Transverse colon (tissue), 4 donors: ENCODE measurements at regions of chr17 and their contacts with region 1.

Region 1: DNA sequence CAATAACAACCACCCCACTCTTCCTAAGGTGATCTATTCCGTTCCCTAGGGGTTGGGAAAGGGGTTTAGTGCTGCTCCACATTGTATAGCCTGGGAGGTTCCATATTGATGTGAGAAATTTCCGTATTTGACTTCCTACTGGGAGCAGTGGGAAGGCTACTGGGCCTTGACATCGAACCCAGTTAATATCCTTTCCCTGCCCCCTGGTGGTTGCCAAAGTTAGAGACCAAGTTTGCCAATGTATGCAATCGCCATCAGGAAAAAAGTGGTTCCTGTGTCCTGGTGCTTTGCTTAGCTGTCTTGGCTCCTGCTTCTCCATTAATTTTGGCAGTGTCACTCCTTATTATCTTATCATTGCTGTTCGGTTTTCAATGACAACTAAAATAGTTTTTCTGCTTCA is 914.9 kb downstream of the KCNJ2 start:
- DNase-seq: peak; percentile 46
- H3K4me3 ChIP-seq: no peak overlapping the region
- H3K27ac ChIP-seq: no peak overlapping the region
- H3K4me1 ChIP-seq: no peaks in the 10 kb centered on the region
- H3K27me3 ChIP-seq: no peaks in the 10 kb centered on the region
- CTCF ChIP-seq: peak; percentile 22 to 51 (median 39)
- EP300 ChIP-seq: no peak
- POLR2A ChIP-seq: no peak

Region 2: GRCh38 chr17:70636517-70637133 is 447.6 kb before region 1 on chr17:
- in situ Hi-C with region 1: loop called in 3 of 4 experiments (anchors 25 kb)
- intact Hi-C with region 1: no loop called
- DNase-seq: no peak
- H3K4me3 ChIP-seq: no peak overlapping the region
- H3K27ac ChIP-seq: no peak overlapping the region
- H3K4me1 ChIP-seq: no peaks in the 10 kb centered on the region
- H3K27me3 ChIP-seq: no peaks in the 10 kb centered on the region
- CTCF ChIP-seq: peak; percentile 78 to 91 (median 82)
- EP300 ChIP-seq: no peak
- POLR2A ChIP-seq: no peak

Region 3: GRCh38 chr17:70834039-70834438 is 250.2 kb before region 1 on chr17:
- in situ Hi-C with region 1: no loop called
- intact Hi-C with region 1: no loop called
- DNase-seq: no peak
- H3K4me3 ChIP-seq: no peak overlapping the region
- H3K27ac ChIP-seq: no peak overlapping the region
- H3K4me1 ChIP-seq: no peaks in the 10 kb centered on the region
- H3K27me3 ChIP-seq: no peaks in the 10 kb centered on the region
- CTCF ChIP-seq: no peak
- EP300 ChIP-seq: no peak
- POLR2A ChIP-seq: no peak

Region 4: DNA sequence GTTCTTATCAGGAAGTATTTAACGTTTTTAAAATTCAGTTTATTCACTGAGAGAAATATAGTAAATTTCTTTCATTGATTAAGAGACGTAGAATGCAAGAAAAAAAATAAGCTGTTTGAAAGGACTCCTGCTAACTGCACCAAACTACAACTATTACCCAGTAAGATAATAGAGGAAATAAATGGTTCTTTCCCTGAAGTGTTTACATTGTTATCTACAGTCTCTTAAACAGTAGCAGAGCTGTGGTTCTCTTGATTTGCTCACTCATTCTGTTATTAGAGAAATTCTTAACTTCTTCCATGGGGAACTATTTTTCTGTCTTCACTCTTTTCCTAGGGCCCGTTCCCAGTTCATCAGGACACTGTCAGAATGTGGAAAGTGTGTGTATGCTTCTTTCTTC is 58.1 kb after region 1 on chr17:
- in situ Hi-C with region 1: no loop called
- intact Hi-C with region 1: no loop called
- DNase-seq: no peak
- H3K4me3 ChIP-seq: no peak overlapping the region
- H3K27ac ChIP-seq: no peak overlapping the region
- H3K4me1 ChIP-seq: no peaks in the 10 kb centered on the region
- H3K27me3 ChIP-seq: no peaks in the 10 kb centered on the region
- CTCF ChIP-seq: no peak
- EP300 ChIP-seq: no peak
- POLR2A ChIP-seq: no peak